Activated T-helper 1 cell treated with anti-CD3 and anti-CD28 coated beads, Interleukin-12 subunit alpha, Interleukin-12 subunit beta, Interleukin-2, Interleukin-4 antibody, amounts not matched to agents 30 ng/mL and 10 ng/mL and 1 ng/mL, durations not matched to agents 14 hours and 24 hours and 36 hours (primary cell): ENCODE measurements at regions of chr11 and their contacts with region 1.

Region 1: GRCh38 chr11:12043959-12044819 is 35.8 kb upstream of the DKK3 start:
- DNase-seq: peak; percentile 48
- H3K4me3 Mint-ChIP-seq: no peak overlapping the region
- H3K27ac Mint-ChIP-seq: no peak overlapping the region
- H3K4me1 Mint-ChIP-seq: peaks cover 23% of the 10 kb centered on the region
- H3K27me3 Mint-ChIP-seq: peaks cover 6% of the 10 kb centered on the region

Region 2: DNA sequence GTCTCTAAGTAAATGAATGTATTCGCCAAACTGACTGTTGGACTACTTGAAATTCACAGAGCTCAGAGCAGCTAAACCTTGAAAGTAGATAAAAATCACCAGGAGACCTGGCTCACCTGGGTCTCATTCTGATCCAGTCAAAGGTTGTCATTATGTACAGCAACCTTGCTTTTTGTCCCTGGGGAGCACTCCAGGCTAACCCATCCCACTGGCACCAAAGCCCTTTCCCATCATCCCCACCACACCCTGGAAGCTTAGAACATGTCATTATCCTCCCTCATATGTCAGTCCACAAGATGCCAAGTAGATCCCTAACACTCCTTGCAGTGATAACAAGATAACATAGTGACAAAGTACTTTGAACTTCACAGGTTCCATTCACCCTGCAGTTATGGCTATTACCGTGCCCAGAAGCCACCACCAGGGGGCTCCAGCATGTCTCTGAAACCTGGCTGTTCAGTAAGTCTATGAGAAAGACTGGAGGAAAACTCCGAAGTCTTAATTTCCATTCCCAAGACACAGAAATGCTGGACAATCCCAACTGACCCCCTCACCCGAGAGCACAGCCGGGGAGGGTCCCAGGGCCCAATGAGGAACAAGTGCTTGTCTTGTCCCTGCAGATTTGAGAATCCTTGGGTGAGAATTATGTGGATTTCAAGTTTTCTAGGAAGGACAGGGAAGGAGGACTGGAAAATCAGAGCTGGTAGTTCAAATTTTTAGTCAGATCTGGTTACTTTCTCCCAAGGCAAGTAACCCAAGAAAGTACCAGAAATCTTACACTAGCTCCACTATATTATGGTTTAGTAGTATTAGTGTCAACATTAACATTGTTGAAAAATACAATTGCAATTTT is 245.4 kb before region 1 on chr11:
- intact Hi-C with region 1: loop called (anchors 1 kb)
- DNase-seq: peak; percentile 30
- H3K4me3 Mint-ChIP-seq: no peak overlapping the region
- H3K27ac Mint-ChIP-seq: no peak overlapping the region
- H3K4me1 Mint-ChIP-seq: no peaks in the 10 kb centered on the region
- H3K27me3 Mint-ChIP-seq: peaks cover 18% of the 10 kb centered on the region

Region 3: DNA sequence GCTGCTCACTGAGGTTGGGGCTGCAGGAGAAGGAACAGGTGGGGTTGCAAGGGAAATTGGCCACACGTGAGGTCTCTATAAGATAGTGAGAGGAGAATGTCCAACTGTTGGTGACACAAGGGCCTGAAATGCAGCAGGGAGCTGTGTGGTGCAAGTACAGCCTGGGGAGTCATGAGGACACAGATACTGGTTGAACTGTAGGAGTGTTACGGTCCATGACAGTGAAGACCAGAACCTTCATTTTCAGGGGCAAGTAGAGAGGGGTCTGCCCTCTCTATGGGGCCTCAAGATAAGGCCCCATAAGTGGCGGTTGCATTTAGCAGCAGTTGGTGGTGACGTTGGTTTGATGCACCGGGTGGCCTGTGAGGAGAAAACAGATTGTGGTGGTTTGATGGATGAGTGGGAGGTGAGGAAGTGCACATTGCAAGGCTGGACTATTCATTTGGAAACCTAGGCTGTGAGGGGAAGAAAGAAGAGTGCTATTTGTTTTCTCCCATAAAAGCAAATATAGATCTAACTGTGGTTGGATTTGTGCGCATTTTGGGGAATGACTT is 105.6 kb after region 1 on chr11:
- intact Hi-C with region 1: loop called (anchors 1 kb)
- DNase-seq: peak; percentile 48
- H3K4me3 Mint-ChIP-seq: peak overlapping the region; percentile 43
- H3K27ac Mint-ChIP-seq: peak overlapping the region; percentile 92
- H3K4me1 Mint-ChIP-seq: peaks cover 85% of the 10 kb centered on the region
- H3K27me3 Mint-ChIP-seq: no peaks in the 10 kb centered on the region

Region 4: GRCh38 chr11:12207384-12208150 is 163.4 kb after region 1 on chr11:
- intact Hi-C with region 1: loop called (anchors 1 kb)
- DNase-seq: no peak
- H3K4me3 Mint-ChIP-seq: peak overlapping the region; percentile 68
- H3K27ac Mint-ChIP-seq: peak overlapping the region; percentile 93
- H3K4me1 Mint-ChIP-seq: peaks cover 87% of the 10 kb centered on the region
- H3K27me3 Mint-ChIP-seq: no peaks in the 10 kb centered on the region

Region 5: GRCh38 chr11:12281571-12282478 is 237.6 kb after region 1 on chr11:
- intact Hi-C with region 1: loop called (anchors 1 kb)
- DNase-seq: peak; percentile 63
- H3K4me3 Mint-ChIP-seq: no peak overlapping the region
- H3K27ac Mint-ChIP-seq: peak overlapping the region; percentile 20
- H3K4me1 Mint-ChIP-seq: peaks cover 22% of the 10 kb centered on the region
- H3K27me3 Mint-ChIP-seq: no peaks in the 10 kb centered on the region